CD14-positive monocyte (primary cell): ENCODE measurements at regions of chr1 and their contacts with region 1.

Region 1: DNA sequence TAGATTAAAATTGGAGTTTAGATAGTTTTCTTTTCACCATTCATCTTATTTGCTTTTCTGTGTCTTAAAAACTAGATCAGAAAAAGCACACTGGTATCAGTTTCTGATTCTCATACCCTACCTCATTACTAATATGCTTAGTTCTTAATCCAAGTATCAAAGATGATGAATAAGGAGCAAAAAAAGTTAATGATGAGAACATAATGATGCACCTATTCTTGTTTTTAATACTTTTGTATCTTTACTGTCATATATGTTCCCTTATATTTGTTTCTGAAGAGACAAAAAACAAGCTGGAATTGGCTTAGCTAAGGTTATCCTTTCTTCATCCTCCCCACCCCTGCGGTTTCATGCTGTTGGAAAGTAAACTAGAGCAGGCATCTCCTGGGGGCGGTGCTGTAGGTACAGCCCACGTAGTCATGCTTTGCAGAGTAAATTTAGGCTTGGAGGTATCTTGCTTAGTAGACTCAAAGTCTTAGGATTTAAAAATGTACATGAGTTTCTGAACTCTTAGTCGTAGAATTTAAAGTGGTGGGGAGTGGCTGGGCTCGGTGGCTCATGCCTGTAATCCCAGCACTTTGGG is 16.4 kb downstream of the CNIH4 start:
- DNase-seq: no peak
- H3K4me3 ChIP-seq: no peak overlapping the region
- H3K4me3 Mint-ChIP-seq: no peak overlapping the region
- H3K27ac ChIP-seq: no peak overlapping the region
- H3K27ac Mint-ChIP-seq: peak overlapping the region in 2 of 7 donors; percentile 54 to 68
- H3K4me1 ChIP-seq: peaks cover 19 to 24% of the 10 kb centered on the region in 2 donors
- H3K4me1 Mint-ChIP-seq: peaks cover 28% of the 10 kb centered on the region
- H3K27me3 ChIP-seq: no peaks in the 10 kb centered on the region
- H3K27me3 Mint-ChIP-seq: peaks cover 0 to 2% (median 0%) of the 10 kb centered on the region in 3 donors
- CTCF ChIP-seq: no peak

Region 2: GRCh38 chr1:223860051-223860622 is 513.0 kb before region 1 on chr1:
- intact Hi-C with region 1: no loop called
- DNase-seq: no peak
- H3K4me3 ChIP-seq: no peak overlapping the region
- H3K4me3 Mint-ChIP-seq: no peak overlapping the region
- H3K27ac ChIP-seq: no peak overlapping the region
- H3K27ac Mint-ChIP-seq: peak overlapping the region in 1 of 7 donors; percentile 45
- H3K4me1 ChIP-seq: no peaks in the 10 kb centered on the region
- H3K4me1 Mint-ChIP-seq: no peaks in the 10 kb centered on the region
- H3K27me3 ChIP-seq: no peaks in the 10 kb centered on the region
- H3K27me3 Mint-ChIP-seq: peaks cover 5 to 12% (median 8%) of the 10 kb centered on the region in 3 donors
- CTCF ChIP-seq: no peak

Region 3: GRCh38 chr1:224411766-224412165 is 38.7 kb after region 1 on chr1:
- intact Hi-C with region 1: loop called in 1 of 2 experiments (anchors 5 kb)
- DNase-seq: no peak
- H3K4me3 ChIP-seq: no peak overlapping the region
- H3K4me3 Mint-ChIP-seq: no peak overlapping the region
- H3K27ac ChIP-seq: peak overlapping the region in 1 of 2 donors; percentile 24
- H3K27ac Mint-ChIP-seq: peak overlapping the region in 2 of 7 donors; percentile 4 to 50
- H3K4me1 ChIP-seq: no peaks in the 10 kb centered on the region
- H3K4me1 Mint-ChIP-seq: no peaks in the 10 kb centered on the region
- H3K27me3 ChIP-seq: no peaks in the 10 kb centered on the region
- H3K27me3 Mint-ChIP-seq: no peaks in the 10 kb centered on the region
- CTCF ChIP-seq: no peak